Right cardiac atrium (tissue), 5 donors: ENCODE measurements at regions of chrX and their contacts with region 1.

Region 1: GRCh38 chrX:68842781-68843581 is 14.2 kb downstream of the EFNB1 start:
- DNase-seq: no peak
- ATAC-seq: peak; percentile 24 to 51
- H3K4me3 ChIP-seq: no peak overlapping the region
- H3K27ac ChIP-seq: no peak overlapping the region
- H3K4me1 ChIP-seq: peaks cover 3% of the 10 kb centered on the region
- H3K27me3 ChIP-seq: no peaks in the 10 kb centered on the region

Region 2: GRCh38 chrX:68693481-68694434 is 149.2 kb before region 1 on chrX:
- intact Hi-C with region 1: no loop called
- DNase-seq: peak; percentile 90 to 95 (median 94)
- ATAC-seq: peak; percentile 90 to 94
- H3K4me3 ChIP-seq: peak overlapping the region; percentile 70
- H3K27ac ChIP-seq: peak overlapping the region; percentile 57
- H3K4me1 ChIP-seq: peaks cover under 1% of the 10 kb centered on the region
- H3K27me3 ChIP-seq: no peaks in the 10 kb centered on the region

Region 3: GRCh38 chrX:68894513-68895340 is 51.7 kb after region 1 on chrX:
- intact Hi-C with region 1: loop called in 1 of 4 experiments (anchors 10 kb)
- DNase-seq: peak; percentile 64 to 86 (median 84)
- ATAC-seq: peak; percentile 88 to 92
- H3K4me3 ChIP-seq: peak overlapping the region; percentile 12
- H3K27ac ChIP-seq: peak overlapping the region; percentile 100
- H3K4me1 ChIP-seq: peaks cover 13% of the 10 kb centered on the region
- H3K27me3 ChIP-seq: no peaks in the 10 kb centered on the region

Region 4: GRCh38 chrX:69077895-69078455 is 235.0 kb after region 1 on chrX:
- intact Hi-C with region 1: no loop called
- DNase-seq: no peak
- ATAC-seq: no peak
- H3K4me3 ChIP-seq: no peak overlapping the region
- H3K27ac ChIP-seq: no peak overlapping the region
- H3K4me1 ChIP-seq: peaks cover 1% of the 10 kb centered on the region
- H3K27me3 ChIP-seq: no peaks in the 10 kb centered on the region